Right ventricle myocardium superior (tissue), 1 donor: ENCODE measurements at regions of chr1 and their contacts with region 1.

Region 1: DNA sequence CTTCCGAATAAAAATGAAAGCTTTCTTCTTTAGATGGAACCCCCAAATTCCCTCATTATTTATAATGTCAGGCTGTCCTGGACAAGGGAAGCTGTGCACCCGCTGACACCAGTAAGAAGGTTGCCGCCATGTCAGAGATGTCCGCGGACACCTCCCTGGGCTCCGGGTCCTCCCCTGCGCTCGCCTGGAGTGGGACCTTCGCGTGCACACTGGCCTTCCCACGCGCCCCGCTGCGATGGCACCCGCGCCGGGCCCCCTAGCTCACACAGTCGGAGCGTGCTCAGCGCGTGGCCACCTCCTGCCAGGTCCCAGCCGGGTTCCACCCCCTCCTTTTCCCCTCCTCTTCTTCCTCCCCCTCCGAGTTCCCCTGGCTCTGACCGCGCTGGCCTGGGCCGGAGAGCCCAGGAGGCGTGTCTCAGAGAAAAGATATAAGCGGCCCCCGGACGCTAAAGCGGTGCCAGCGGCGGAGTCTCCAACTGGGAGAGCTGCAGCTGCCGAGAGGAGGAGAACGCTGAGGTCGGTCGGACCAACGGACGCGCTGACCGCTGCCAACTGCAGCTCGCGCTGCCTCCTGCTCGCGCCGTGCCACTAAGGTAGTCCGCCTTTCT is at the start of gene G0S2:
- DNase-seq: peak; percentile 92
- ATAC-seq: peak; percentile 89
- total RNA-seq, gene G0S2: 453 TPM

Region 2: GRCh38 chr1:209646558-209646957 is 28.5 kb before region 1 on chr1:
- intact Hi-C with region 1: loop called (anchors 2 kb)
- DNase-seq: no peak
- ATAC-seq: no peak